Activated CD4-positive, alpha-beta T cell treated with anti-CD3 and anti-CD28 coated beads, Interleukin-2, amount 10 ng/mL, durations not matched to agents 7 days and 5 days (primary cell): ENCODE measurements at regions of chr1 and their contacts with region 1.

Region 1: DNA sequence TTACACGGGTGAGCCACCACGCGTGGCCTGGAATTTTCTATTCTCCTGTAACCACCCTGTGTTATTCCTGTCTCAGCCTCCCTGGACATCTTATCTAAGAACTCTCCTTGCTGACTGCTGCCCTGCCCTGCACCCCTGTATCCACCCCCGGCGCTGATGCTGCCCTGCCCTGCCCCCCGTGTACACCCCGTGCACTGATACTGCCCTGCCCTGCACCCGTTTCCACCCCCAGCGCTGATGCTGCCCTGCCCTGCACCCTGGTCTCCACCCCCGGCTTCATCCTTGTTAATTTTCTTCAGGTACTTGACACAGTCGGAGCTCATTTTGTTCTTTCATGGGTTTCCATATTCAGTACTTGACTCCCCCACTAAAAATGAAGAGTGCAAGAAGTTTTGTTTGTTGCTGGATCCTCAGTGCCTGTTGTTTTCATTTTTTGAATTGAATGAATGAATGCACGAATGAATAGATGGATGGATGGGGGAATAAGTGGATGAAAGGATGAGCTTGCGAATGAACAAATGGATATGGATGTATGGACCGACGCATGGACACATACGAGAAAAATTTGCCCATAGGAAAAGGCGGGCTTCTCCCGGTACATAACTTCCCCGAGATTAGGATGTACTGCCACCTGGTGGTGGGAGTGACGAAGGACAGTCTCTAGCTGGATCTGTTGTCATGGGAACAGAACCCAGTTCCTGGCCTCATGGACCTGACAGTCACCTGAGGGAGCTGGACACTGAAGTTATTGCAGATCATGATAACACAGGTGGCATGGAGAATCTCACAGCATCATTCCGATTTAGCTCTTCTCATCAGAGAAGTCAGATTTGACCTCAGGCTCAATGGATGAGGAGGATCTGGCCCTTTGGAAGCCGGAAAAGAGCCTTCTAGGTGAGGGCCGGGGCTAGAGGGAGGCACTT is 14.9 kb downstream of the AADACL4 start:
- DNase-seq: peak; percentile 80
- H3K4me3 Mint-ChIP-seq: no peak overlapping the region
- H3K27ac Mint-ChIP-seq: no peak overlapping the region
- H3K4me1 Mint-ChIP-seq: peaks cover 9% of the 10 kb centered on the region
- H3K27me3 Mint-ChIP-seq: peaks cover 11% of the 10 kb centered on the region

Region 2: GRCh38 chr1:12272770-12273169 is 386.0 kb before region 1 on chr1:
- CTCF ChIA-PET with region 1: interaction called, 13 read pairs
- POLR2A ChIA-PET with region 1: no interaction called
- DNase-seq: no peak
- H3K4me3 Mint-ChIP-seq: no peak overlapping the region
- H3K27ac Mint-ChIP-seq: no peak overlapping the region
- H3K4me1 Mint-ChIP-seq: no peaks in the 10 kb centered on the region
- H3K27me3 Mint-ChIP-seq: no peaks in the 10 kb centered on the region

Region 3: GRCh38 chr1:12619792-12620487 is 38.9 kb before region 1 on chr1:
- CTCF ChIA-PET with region 1: interaction called, 13 read pairs
- POLR2A ChIA-PET with region 1: no interaction called
- DNase-seq: peak; percentile 82
- H3K4me3 Mint-ChIP-seq: peak overlapping the region; percentile 96
- H3K27ac Mint-ChIP-seq: peak overlapping the region; percentile 63
- H3K4me1 Mint-ChIP-seq: peaks cover 49% of the 10 kb centered on the region
- H3K27me3 Mint-ChIP-seq: peaks cover 7% of the 10 kb centered on the region

Region 4: GRCh38 chr1:12745992-12746323 is 87.2 kb after region 1 on chr1 and contains the start of gene CFAP107:
- CTCF ChIA-PET with region 1: no interaction called
- POLR2A ChIA-PET with region 1: no interaction called
- DNase-seq: peak; percentile 6
- H3K4me3 Mint-ChIP-seq: no peak within 1 kb of the TSS
- H3K27ac Mint-ChIP-seq: no peak within 1 kb of the TSS
- H3K4me1 Mint-ChIP-seq: peaks cover 11% of the 10 kb centered on the region
- H3K27me3 Mint-ChIP-seq: peaks cover 25% of the 10 kb centered on the region
- total RNA-seq, gene CFAP107: not detected